Activated CD8-positive, alpha-beta memory T cell treated with anti-CD3 and anti-CD28 coated beads, Interleukin-2, amount 10 ng/mL, durations not matched to agents 7 days and 5 days (primary cell): ENCODE measurements at regions of chr1 and their contacts with region 1.

Region 1: DNA sequence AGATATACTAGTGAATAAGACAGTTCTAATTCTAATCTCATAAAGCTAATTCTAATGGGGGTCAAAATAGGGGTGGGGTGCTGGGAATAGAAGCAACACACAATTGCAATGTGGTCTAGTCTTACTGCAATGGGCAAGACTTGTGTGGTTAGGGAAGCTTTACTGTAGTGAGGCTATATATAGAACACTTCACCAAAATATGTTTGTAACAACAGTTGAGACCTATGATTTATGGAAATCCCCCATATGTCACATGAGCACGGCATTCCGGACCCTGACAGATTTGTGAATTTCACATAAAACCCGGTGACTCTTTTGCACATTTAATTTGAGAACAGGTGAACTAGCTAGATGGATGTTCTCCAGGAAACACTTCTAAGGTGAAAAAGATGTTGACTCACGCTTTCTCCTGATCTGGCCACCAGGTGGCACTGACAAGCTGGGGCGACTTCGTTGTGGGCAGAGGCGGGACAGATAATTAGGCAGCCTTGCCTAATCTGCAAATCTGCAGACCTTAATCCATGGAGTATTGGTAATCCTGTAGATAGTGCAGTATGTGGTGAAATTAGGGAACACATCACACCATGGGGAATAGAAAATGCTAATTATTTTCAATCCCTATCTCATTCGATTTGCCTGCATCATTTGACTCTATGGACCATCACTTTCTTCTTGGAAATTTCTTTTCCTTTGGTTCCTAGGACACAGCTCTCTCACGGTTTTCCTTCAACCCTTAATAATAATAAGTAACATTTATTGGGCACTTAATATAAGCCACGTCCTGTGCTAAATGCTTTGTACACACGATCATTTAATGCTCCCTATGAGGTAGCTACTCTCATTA is 37.7 kb downstream of the KIAA0040 start:
- DNase-seq: peak; percentile 83
- ATAC-seq: peak; percentile 64
- H3K4me3 Mint-ChIP-seq: no peak overlapping the region
- H3K27ac Mint-ChIP-seq: no peak overlapping the region
- H3K4me1 Mint-ChIP-seq: peaks cover 11% of the 10 kb centered on the region
- H3K27me3 Mint-ChIP-seq: peaks cover 35% of the 10 kb centered on the region

Region 2: DNA sequence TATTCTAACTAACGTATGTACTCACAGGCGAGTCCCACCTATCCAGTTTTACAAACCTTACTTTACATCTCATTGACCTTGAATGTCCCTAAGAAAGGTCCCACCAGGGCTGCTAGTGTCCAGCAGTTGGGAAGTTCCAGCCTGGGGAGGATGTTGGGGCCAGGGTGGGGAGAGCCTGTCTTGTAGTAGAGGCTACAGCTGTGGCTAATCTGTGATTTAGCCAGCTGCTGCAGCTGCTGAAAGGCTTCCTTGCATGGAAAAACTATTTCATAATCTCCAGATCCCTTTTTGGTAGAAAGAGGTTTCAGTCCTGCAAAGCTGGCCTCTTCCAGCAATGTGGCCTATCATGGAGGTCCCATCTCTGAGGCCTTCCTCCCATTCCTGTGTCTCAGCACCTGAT is 64.1 kb before region 1 on chr1:
- CTCF ChIA-PET with region 1: no interaction called
- DNase-seq: no peak
- ATAC-seq: no peak
- H3K4me3 Mint-ChIP-seq: no peak overlapping the region
- H3K27ac Mint-ChIP-seq: no peak overlapping the region
- H3K4me1 Mint-ChIP-seq: no peaks in the 10 kb centered on the region
- H3K27me3 Mint-ChIP-seq: peaks cover 17% of the 10 kb centered on the region

Region 3: DNA sequence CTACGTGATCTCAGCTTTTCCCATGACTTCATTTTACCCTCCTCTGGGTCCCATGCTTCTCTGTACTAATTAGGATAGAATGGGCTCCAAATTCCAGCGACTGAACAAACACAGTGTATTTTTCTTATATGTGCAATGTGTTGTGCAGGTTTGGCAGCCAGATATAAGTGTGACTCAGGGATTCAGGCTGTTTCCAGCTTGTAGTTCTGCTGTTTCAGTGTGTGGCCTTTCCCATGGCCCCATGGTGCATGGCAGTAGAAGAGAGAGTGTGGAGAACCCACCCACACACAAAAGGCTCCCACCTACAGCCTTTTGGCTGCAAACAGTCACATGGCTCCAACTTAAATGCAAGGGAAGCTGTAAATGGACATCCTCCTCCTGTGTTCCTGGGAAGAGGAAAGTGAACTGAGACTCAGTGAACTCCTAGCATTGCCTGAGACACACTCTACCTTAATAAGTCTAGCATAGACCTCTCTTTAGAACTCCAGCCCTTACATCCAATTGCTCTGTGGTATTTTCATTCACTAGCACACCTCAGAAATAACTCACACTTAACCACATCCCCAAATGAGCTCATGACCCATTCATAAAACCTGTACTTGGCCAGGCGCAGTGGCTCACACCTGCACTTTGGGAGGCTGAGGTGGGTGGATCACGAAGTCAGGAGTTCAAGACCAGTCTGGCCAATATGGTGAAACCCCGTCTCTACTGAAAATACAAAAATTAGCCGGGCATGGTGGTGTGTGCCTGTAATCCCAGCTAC is 21.0 kb before region 1 on chr1:
- CTCF ChIA-PET with region 1: interaction called, 43 read pairs
- DNase-seq: peak; percentile 38
- ATAC-seq: no peak
- H3K4me3 Mint-ChIP-seq: no peak overlapping the region
- H3K27ac Mint-ChIP-seq: no peak overlapping the region
- H3K4me1 Mint-ChIP-seq: peaks cover 6% of the 10 kb centered on the region
- H3K27me3 Mint-ChIP-seq: peaks cover 34% of the 10 kb centered on the region

Region 4: GRCh38 chr1:175174309-175175165 is 19.7 kb after region 1 on chr1:
- CTCF ChIA-PET with region 1: interaction called, 20 read pairs
- DNase-seq: no peak
- ATAC-seq: peak; percentile 30
- H3K4me3 Mint-ChIP-seq: no peak overlapping the region
- H3K27ac Mint-ChIP-seq: peak overlapping the region; percentile 35
- H3K4me1 Mint-ChIP-seq: peaks cover 40% of the 10 kb centered on the region
- H3K27me3 Mint-ChIP-seq: no peaks in the 10 kb centered on the region

Region 5: DNA sequence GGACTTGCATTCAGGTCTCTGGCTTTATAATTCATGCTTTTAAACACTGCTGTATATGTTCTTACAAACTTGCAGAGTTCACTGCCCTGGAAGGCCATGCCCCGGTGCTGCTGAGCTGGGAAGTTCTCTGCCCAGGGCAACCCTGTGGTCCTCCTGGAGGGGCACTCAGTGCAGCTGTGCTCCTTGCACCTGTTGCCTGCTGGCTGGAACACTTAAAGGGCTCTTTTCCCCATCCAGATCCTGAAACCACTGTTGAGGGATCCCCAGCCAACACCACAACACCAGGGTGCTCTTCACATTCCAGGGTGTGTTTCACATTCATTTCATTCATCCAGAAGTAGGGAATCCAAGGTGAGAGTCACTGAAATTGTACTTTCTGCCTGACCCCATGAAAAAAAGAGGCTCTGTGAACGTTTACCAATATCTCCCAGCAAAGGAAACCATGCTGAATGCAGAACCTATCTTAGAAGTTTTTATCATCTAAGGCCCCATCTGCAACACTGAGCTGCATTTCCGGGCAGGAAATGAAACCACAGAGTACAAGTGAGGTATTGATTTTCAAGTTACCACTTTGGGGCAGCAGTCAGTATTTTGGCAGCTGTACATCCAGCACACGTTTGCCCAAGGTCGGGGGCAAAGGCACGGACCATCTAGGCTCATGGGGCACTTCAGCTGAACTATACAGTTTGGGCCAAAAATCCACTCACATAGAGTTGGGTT is 54.1 kb after region 1 on chr1:
- CTCF ChIA-PET with region 1: interaction called, 13 read pairs
- DNase-seq: peak; percentile 82
- ATAC-seq: peak; percentile 90
- H3K4me3 Mint-ChIP-seq: peak overlapping the region; percentile 70
- H3K27ac Mint-ChIP-seq: peak overlapping the region; percentile 99
- H3K4me1 Mint-ChIP-seq: peaks cover 51% of the 10 kb centered on the region
- H3K27me3 Mint-ChIP-seq: no peaks in the 10 kb centered on the region

Region 6: DNA sequence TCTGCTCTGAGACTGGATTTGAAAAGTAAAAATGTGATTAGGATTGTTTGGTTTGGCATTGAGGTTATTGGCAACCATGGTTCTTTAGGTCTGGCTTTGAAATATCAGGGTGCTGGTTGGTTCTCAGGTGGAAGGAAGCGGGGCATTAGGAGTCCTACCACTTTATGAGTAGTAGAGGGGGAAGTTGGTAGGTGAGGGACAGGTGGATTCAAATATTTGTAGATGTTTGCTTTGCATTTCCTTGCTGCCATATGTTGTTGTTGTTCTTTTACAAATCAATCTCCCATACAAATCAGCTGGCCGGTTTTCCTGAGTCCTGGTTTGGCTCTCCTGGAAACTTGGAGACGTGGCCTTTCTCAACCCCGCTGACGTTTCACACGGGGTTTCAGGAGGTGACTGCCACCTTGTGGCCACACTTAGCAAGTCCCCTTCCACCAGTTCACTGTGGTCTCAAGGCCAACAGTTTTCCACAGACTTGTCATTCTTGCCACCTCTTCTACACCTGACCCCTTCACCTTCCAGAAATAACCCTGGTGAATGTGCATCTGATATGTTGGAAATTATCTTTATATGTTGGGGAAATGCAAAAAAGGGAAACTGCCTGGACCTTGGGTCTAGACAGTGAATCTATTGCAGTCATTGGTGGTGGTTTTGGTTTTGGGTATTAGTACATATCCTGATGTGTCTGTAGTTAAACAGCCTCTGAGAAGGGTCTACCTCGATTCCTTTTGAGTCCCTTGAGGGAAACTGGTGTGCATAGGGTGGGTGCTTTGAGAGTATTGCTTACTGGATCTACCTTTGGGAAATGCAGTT is 164.8 kb after region 1 on chr1:
- CTCF ChIA-PET with region 1: interaction called, 269 read pairs
- DNase-seq: peak; percentile 78
- ATAC-seq: peak; percentile 93
- H3K4me3 Mint-ChIP-seq: no peak overlapping the region
- H3K27ac Mint-ChIP-seq: no peak overlapping the region
- H3K4me1 Mint-ChIP-seq: peaks cover 6% of the 10 kb centered on the region
- H3K27me3 Mint-ChIP-seq: peaks cover 6% of the 10 kb centered on the region

Region 7: GRCh38 chr1:175338387-175339135 is 183.7 kb after region 1 on chr1:
- CTCF ChIA-PET with region 1: interaction called, 20 read pairs
- DNase-seq: peak; percentile 68
- ATAC-seq: peak; percentile 70
- H3K4me3 Mint-ChIP-seq: no peak overlapping the region
- H3K27ac Mint-ChIP-seq: no peak overlapping the region
- H3K4me1 Mint-ChIP-seq: no peaks in the 10 kb centered on the region
- H3K27me3 Mint-ChIP-seq: peaks cover 21% of the 10 kb centered on the region